Activated CD8-positive, alpha-beta T cell treated with anti-CD3 and anti-CD28 coated beads, Interleukin-2, amount 10 ng/mL, durations not matched to agents 7 days and 5 days (primary cell): ENCODE measurements at regions of chr12 and their contacts with region 1.

Region 1: GRCh38 chr12:7806863-7807487 is 17.8 kb downstream of the NANOG start:
- DNase-seq: peak; percentile 71
- ATAC-seq: peak; percentile 60
- H3K4me3 Mint-ChIP-seq: no peak overlapping the region
- H3K27ac Mint-ChIP-seq: no peak overlapping the region
- H3K4me1 Mint-ChIP-seq: no peaks in the 10 kb centered on the region
- H3K27me3 Mint-ChIP-seq: peaks cover 3% of the 10 kb centered on the region

Region 2: DNA sequence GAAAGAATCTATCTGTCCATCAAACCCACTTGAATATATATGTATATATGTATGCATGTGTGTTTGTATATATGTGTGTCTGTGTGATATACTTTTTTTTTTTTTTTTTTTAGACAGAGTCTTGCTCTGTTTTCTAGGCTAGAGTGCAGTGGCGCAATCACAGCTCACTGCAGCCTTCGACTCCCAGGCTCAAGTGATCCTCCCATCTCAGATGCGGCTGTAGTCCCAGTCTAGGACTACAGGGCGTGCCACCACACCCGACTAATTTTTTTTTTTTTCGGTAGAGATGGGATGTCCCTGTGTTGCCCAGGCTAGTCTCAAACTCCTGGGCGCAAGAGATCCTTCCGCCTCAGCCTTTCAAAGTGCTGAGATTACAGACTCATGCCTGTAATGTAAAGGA is 128.2 kb before region 1 on chr12:
- CTCF ChIA-PET with region 1: interaction called, 16 read pairs
- POLR2A ChIA-PET with region 1: no interaction called
- DNase-seq: no peak
- ATAC-seq: no peak
- H3K4me3 Mint-ChIP-seq: no peak overlapping the region
- H3K27ac Mint-ChIP-seq: no peak overlapping the region
- H3K4me1 Mint-ChIP-seq: peaks cover 7% of the 10 kb centered on the region
- H3K27me3 Mint-ChIP-seq: peaks cover 5% of the 10 kb centered on the region